SK-N-SH (cell line): ENCODE measurements at regions of chr7 and their contacts with region 1.

Region 1: DNA sequence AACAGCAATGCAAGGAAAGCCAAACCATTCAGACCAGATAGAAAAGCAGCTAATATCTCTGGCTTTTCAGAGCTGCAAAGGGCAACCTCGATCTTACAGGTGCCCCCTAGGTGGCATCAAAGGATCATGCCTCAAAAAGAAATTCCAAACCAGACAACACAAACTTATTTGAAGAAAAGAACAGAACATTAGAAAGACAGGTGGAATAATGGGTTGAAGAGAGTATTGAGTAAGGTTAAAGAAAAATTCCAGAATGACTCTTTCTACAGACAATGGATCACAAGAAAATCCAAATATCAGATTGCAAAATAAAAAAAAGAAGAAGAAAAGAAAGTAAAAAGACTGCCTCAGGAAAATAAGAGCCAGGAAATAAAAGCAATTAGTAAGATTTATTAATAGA is 213.7 kb downstream of the ELMO1 start:
- DNase-seq: peak; percentile 54
- H3K4me3 ChIP-seq: no peak overlapping the region
- H3K27ac ChIP-seq: no peak overlapping the region
- H3K4me1 ChIP-seq: peaks cover 0 to 13% of the 10 kb centered on the region in 2 experiments; a peak in 2 of 4 replicates
- H3K27me3 ChIP-seq: no peaks in the 10 kb centered on the region
- CTCF ChIP-seq: peak; percentile 46
- EP300 ChIP-seq: no peak
- RAD21 ChIP-seq: peak; percentile 96

Region 2: DNA sequence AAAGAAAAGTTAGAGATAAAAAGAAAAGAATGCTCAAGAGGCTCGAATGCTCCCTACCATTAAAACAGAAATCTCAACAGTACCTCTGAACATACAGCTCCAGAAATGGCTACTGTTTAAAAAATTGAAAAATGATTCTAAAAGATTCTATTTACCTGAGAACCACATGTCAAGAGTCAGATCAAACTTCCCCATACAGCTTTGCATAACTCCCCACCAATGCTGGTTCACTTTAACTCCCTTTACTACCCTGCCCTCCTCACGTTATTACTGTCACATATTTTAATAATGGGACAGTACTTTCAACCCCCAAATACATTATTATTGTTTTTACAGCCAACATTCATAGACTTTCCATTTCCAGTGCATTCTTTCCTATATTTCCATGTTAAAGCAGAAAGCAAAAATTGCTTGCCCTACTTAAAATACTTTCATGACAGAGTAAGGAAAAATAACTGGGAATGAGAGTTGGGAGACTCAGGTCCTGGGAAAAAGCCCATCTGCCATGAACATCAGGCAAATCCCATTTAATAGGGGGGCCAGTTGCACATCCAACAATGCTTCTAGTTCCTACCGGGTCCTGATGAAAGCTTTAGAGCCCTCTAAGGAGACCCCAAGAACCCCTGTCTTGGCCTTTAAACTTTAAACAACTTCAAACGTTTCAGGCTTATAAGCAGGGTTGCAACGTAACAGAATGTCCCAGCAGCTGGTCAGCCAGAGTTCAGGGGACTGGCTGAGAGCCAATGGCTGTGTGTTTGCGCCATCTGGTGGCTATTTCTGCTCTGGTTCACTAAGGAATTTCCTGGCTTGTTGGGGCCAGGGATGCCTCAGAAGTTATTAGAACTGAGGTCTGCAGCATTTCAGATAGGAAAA is 33.7 kb before region 1 on chr7:
- CTCF ChIA-PET with region 1: interaction called, 11 read pairs
- POLR2A ChIA-PET with region 1: no interaction called
- DNase-seq: peak; percentile 83
- H3K4me3 ChIP-seq: no peak overlapping the region
- H3K27ac ChIP-seq: no peak overlapping the region
- H3K4me1 ChIP-seq: peaks cover 0 to 15% of the 10 kb centered on the region in 2 experiments; a peak in 2 of 4 replicates
- H3K27me3 ChIP-seq: no peaks in the 10 kb centered on the region
- CTCF ChIP-seq: peak; percentile 99
- EP300 ChIP-seq: peak in 1 of 2 experiments; percentile 26; a peak in 1 of 4 replicates
- RAD21 ChIP-seq: peak; percentile 91

Region 3: DNA sequence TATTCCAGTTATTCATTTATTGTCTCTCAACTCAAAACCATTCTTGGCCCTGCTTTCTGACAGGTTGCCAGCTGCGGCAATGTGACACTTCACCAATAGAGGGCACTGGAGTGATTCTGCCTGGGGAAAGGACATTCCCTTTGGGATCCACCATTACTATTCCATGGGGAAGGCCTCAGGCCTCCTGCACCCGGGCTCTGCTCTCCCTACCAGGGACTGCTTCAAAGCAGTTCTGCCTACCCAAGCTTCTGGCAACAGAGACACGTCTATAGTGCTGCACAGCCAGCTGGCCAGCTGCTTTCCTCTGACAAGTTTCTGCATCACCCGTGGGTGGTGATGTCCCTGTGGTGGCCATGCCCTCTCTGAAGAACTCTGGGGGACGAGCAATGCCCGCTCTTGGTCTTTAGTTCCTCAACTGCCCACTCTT is 49.9 kb after region 1 on chr7:
- CTCF ChIA-PET with region 1: interaction called, 28 read pairs
- POLR2A ChIA-PET with region 1: no interaction called
- DNase-seq: peak; percentile 72
- H3K4me3 ChIP-seq: no peak overlapping the region
- H3K27ac ChIP-seq: no peak overlapping the region
- H3K4me1 ChIP-seq: peaks cover 0 to 44% of the 10 kb centered on the region in 2 experiments; a peak in 2 of 4 replicates
- H3K27me3 ChIP-seq: no peaks in the 10 kb centered on the region
- CTCF ChIP-seq: peak; percentile 36; the same call in 1 of the 2 replicates
- EP300 ChIP-seq: no peak
- RAD21 ChIP-seq: peak; percentile 89

Region 4: GRCh38 chr7:37448636-37449361 is 213.9 kb after region 1 on chr7 and contains the start of gene ELMO1:
- CTCF ChIA-PET with region 1: interaction called, 25 read pairs
- POLR2A ChIA-PET with region 1: no interaction called
- DNase-seq: peak; percentile 94
- H3K4me3 ChIP-seq: peak within 1 kb of the TSS in 1 of 2 experiments; percentile 55; a peak in 2 of 4 replicates
- H3K27ac ChIP-seq: peak within 1 kb of the TSS in 1 of 2 experiments; percentile 73; a peak in 2 of 4 replicates
- H3K4me1 ChIP-seq: peaks cover 0 to 13% of the 10 kb centered on the region in 2 experiments; a peak in 2 of 4 replicates
- H3K27me3 ChIP-seq: no peaks in the 10 kb centered on the region
- CTCF ChIP-seq: no peak
- EP300 ChIP-seq: no peak; a peak in 1 of 4 replicates
- RAD21 ChIP-seq: peak; percentile 52
- polyA plus RNA-seq, gene ELMO1: 0.64 and 2.8 TPM in 2 replicates

Region 5: DNA sequence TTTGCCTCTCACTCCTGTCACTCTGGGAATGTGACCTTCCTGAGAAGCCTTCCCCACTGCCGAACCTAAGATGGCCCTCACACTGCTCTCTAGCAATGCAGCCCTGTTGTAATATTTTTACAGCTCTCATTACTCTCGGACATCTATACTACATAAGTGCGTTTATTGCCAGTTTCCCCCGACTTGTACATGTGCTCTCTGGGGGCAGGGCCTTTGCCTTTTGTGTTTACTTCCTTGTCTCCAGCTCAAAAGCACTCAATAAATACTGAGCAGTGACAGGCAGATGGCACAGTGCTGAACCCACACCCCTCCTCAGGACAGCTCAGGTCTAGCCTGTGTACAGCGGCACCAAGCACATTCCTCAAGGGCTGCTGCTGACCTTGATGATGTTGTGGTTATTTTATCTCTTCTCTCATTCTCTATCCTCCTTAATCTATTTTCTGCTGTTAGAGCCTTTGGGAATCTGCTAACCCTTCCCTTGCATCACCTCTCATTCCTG is 281.7 kb after region 1 on chr7:
- CTCF ChIA-PET with region 1: interaction called, 12 read pairs
- POLR2A ChIA-PET with region 1: no interaction called
- DNase-seq: no peak
- H3K4me3 ChIP-seq: no peak overlapping the region
- H3K27ac ChIP-seq: no peak overlapping the region
- H3K4me1 ChIP-seq: no peaks in the 10 kb centered on the region
- H3K27me3 ChIP-seq: no peaks in the 10 kb centered on the region
- CTCF ChIP-seq: no peak
- EP300 ChIP-seq: no peak
- RAD21 ChIP-seq: no peak

Region 6: GRCh38 chr7:37833107-37833817 is 598.3 kb after region 1 on chr7:
- CTCF ChIA-PET with region 1: interaction called, 116 read pairs
- POLR2A ChIA-PET with region 1: no interaction called
- DNase-seq: peak; percentile 60
- H3K4me3 ChIP-seq: peak overlapping the region; percentile 5 to 21; a peak in 1 of 4 replicates
- H3K27ac ChIP-seq: no peak overlapping the region
- H3K4me1 ChIP-seq: peaks cover 0 to 9% of the 10 kb centered on the region in 2 experiments; a peak in 1 of 4 replicates
- H3K27me3 ChIP-seq: no peaks in the 10 kb centered on the region
- CTCF ChIP-seq: peak; percentile 66
- EP300 ChIP-seq: no peak
- RAD21 ChIP-seq: peak; percentile 80